Naive thymus-derived CD4-positive, alpha-beta T cell (primary cell): ENCODE measurements at regions of chr4 and their contacts with region 1.

Region 1: DNA sequence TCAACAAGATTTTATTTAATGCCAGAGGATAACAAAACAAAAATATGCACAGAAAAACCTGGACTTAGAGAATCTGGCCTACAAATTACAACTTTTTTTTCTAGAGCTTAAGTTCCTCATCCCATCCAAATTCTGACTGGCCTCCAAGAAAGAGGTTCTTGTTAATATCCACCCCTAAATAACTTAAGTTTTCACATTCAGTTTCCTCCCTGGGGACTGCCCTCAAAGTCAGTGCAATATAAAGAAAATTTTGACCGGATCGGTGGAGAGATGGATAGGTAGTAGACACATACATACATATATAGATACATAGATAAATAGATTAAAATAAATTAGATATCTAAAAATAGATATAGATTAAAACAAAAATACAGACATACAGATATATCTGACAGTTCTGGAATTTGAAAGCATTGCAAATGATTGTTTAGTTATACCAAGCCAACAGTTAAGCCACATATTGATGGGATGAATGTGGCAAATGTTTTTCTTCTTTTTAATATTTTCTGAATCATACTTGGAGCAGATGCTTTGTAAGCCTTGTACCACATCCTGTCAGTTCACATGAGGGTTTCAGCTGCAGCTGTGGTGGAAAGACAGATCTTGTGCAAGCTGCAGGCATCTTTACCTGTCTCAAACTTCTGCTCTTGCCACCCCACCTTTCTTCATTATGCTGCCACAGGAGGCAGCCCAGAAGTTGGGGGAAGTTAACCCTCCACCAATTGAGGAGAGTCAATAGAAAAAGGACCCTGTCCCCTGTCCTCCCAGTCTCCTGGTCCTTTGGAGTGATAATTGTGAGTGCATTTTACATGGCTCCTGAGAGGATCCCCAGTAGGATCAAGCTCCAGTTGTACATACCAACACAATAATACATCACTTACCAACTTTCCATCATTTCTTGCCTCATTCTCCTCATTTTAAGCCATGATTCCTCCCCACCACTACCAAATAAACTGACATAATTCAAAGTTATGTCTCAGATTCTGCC is 58.5 kb upstream of the PRDM8 start:
- DNase-seq: peak in 8 of 9 donors; percentile 50 to 77 (median 64)
- ATAC-seq: peak; percentile 89
- H3K4me3 ChIP-seq: no peak overlapping the region
- H3K4me3 Mint-ChIP-seq: peak overlapping the region in 7 of 10 donors; percentile 24 to 65 (median 48)
- H3K27ac ChIP-seq: no peak overlapping the region
- H3K27ac Mint-ChIP-seq: peak overlapping the region; percentile 58 to 91 (median 84)
- H3K4me1 ChIP-seq: peaks cover 20 to 32% of the 10 kb centered on the region in 2 donors
- H3K4me1 Mint-ChIP-seq: peaks cover 30 to 71% (median 56%) of the 10 kb centered on the region in 7 donors
- H3K27me3 ChIP-seq: no peaks in the 10 kb centered on the region
- H3K27me3 Mint-ChIP-seq: no peaks in the 10 kb centered on the region

Region 2: DNA sequence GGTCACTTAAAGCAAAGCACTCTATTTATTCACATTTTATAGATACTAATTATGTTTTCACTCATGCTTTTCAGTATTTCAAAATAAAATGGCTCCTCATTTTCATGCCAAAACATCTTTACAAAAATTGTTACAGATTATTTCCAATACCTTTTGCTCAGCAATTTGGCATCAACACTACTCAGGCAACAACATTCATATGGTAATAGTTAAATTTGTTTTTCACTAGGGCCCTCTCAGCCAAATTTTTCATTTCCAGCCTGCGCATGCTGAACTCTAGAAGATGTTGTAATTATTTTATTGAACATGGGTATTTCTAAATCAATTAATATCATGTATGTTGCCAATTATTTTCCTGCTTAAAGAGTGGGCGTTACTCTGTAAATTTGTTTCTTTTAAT is 291.4 kb before region 1 on chr4:
- CTCF ChIA-PET with region 1: no interaction called
- POLR2A ChIA-PET with region 1: no interaction called
- intact Hi-C with region 1: no loop called
- DNase-seq: no peak
- ATAC-seq: no peak
- H3K4me3 ChIP-seq: no peak overlapping the region
- H3K4me3 Mint-ChIP-seq: no peak overlapping the region
- H3K27ac ChIP-seq: no peak overlapping the region
- H3K27ac Mint-ChIP-seq: no peak overlapping the region
- H3K4me1 ChIP-seq: no peaks in the 10 kb centered on the region
- H3K4me1 Mint-ChIP-seq: no peaks in the 10 kb centered on the region
- H3K27me3 ChIP-seq: no peaks in the 10 kb centered on the region
- H3K27me3 Mint-ChIP-seq: peaks cover 0 to 12% (median 10%) of the 10 kb centered on the region in 5 donors

Region 3: GRCh38 chr4:80153874-80154544 is 15.2 kb after region 1 on chr4:
- CTCF ChIA-PET with region 1: interaction called, 9 read pairs
- POLR2A ChIA-PET with region 1: interaction called, 6 read pairs
- intact Hi-C with region 1: loop called (anchors 2 kb)
- DNase-seq: no peak
- ATAC-seq: no peak
- H3K4me3 ChIP-seq: no peak overlapping the region
- H3K4me3 Mint-ChIP-seq: peak overlapping the region in 1 of 10 donors; percentile 6
- H3K27ac ChIP-seq: no peak overlapping the region
- H3K27ac Mint-ChIP-seq: peak overlapping the region in 2 of 9 donors; percentile 30 to 63
- H3K4me1 ChIP-seq: no peaks in the 10 kb centered on the region
- H3K4me1 Mint-ChIP-seq: peaks cover 0 to 14% (median 10%) of the 10 kb centered on the region in 7 donors
- H3K27me3 ChIP-seq: no peaks in the 10 kb centered on the region
- H3K27me3 Mint-ChIP-seq: peaks cover 0 to 6% (median 0%) of the 10 kb centered on the region in 5 donors